ENCODE measurements at regions of chr13 and their contacts with region 1.

Region 1: GRCh38 chr13:41222259-41222852 is 28.0 kb upstream of the KBTBD7 start:
- DNase-seq: peak; percentile 55 to 72
- H3K4me3 ChIP-seq: no peak overlapping the region
- H3K4me1 ChIP-seq: peaks cover 3% of the 10 kb centered on the region
- H3K27me3 ChIP-seq: no peaks in the 10 kb centered on the region

Region 2: GRCh38 chr13:40578055-40578454 is 644.3 kb before region 1 on chr13:
- in situ Hi-C with region 1: no loop called
- DNase-seq: no peak
- H3K4me3 ChIP-seq: no peak overlapping the region
- H3K4me1 ChIP-seq: no peaks in the 10 kb centered on the region
- H3K27me3 ChIP-seq: no peaks in the 10 kb centered on the region

Region 3: DNA sequence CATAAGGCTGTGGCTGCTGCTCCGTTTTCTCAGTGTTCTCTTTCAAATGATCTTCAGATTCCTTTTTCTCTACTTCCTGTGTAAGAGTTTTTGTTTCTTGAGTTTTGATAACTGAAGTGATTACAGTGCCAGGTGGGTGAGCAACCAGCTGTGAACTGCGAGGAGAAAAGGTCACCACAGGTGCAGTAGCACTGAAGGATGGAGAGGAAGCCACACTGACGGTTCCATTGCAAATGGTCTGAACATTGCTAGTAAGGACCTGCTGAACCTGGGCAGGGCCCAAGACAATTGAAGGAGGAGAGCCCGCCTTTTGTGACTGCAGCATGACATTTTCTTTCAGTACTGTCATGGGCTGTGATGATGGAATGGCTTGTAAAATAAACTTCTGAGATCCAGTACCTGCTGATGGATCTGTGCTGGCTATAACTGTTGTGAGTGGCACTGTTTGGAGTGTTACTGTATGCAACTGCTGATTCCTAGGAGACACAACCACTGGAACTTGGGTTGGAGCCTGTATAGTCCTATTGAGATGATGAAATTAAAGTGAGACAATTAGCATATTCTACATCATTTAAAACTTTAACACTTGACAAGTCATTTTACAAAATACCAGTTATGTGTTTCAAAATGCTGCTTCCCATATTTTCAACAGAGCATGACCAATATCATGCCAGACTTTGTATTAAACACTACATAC is 288.7 kb before region 1 on chr13:
- in situ Hi-C with region 1: no loop called
- DNase-seq: no peak
- H3K4me3 ChIP-seq: no peak overlapping the region
- H3K4me1 ChIP-seq: no peaks in the 10 kb centered on the region
- H3K27me3 ChIP-seq: no peaks in the 10 kb centered on the region

Region 4: DNA sequence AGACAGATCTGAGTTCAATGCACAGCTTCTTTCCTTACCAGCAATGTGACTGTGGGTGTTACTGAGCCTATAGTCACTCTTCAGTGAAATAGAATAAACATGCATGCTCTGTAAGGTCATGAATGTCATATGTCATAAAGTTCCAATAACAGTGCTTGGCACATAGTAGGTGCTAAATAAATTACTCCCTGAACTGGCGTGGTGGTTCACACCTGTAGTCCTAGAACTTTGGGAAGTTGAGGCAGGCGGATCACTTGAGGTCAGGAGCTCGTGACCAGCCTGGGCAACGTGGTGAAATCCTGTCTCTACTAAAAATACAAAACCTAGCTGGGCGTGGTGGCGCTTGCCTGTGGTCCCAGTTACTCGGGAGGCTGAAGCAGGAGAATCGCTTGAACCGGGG is 147.8 kb before region 1 on chr13:
- in situ Hi-C with region 1: loop called (anchors 5 kb)
- DNase-seq: no peak
- H3K4me3 ChIP-seq: no peak overlapping the region
- H3K4me1 ChIP-seq: no peaks in the 10 kb centered on the region
- H3K27me3 ChIP-seq: no peaks in the 10 kb centered on the region

Region 5: GRCh38 chr13:41352935-41353840 is 130.8 kb after region 1 on chr13:
- in situ Hi-C with region 1: no loop called
- DNase-seq: peak; percentile 78 to 81
- H3K4me3 ChIP-seq: no peak overlapping the region
- H3K4me1 ChIP-seq: peaks cover 4% of the 10 kb centered on the region
- H3K27me3 ChIP-seq: no peaks in the 10 kb centered on the region

Measured in HAP-1 (cell line).